ENCODE measurements at regions of chr1 and their contacts with region 1.

Region 1: DNA sequence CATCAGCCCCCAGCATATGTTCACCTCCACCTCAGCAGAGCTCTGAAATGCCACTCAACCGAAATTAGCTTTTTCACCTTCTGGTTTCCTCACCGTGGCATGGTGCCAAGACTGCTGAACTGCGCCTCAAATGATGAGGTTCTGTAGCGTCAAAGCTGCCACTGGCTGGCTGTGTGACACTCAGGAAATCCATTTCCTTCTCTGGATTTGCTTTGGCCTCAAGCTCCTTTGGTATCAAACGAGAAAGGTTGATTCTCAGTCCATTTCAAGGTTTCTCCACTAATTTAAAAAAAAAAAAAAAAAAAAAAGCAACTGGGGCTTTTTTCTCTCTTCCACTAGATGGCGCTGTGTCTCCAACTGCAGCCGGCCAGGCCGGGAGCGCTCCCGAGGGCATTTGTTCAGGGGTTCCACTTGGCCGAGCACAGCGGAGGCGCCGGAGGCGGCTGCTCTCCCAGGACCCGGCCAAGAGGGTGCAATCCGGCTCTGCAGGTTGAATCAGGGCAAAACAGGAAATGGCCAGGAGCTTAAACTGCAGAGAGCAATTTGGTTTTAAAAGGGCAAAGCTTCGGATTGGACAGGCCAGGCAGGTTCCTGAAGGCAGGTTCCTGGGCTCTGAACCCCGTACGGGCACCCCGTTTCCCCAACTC is 26.5 kb upstream of the PLA2G2C start:
- DNase-seq: peak; percentile 44 to 83 (median 53)
- ATAC-seq: peak in 3 of 4 donors; percentile 66 to 83 (median 68)
- H3K4me3 ChIP-seq: no peak overlapping the region
- H3K27ac ChIP-seq: no peak overlapping the region
- H3K4me1 ChIP-seq: peaks cover 0 to 12% (median 6%) of the 10 kb centered on the region in 12 donors
- H3K27me3 ChIP-seq: peaks cover 0 to 23% (median 15%) of the 10 kb centered on the region in 9 donors
- CTCF ChIP-seq: peak; percentile 72 to 86 (median 78)
- POLR2A ChIP-seq: no peak

Region 2: DNA sequence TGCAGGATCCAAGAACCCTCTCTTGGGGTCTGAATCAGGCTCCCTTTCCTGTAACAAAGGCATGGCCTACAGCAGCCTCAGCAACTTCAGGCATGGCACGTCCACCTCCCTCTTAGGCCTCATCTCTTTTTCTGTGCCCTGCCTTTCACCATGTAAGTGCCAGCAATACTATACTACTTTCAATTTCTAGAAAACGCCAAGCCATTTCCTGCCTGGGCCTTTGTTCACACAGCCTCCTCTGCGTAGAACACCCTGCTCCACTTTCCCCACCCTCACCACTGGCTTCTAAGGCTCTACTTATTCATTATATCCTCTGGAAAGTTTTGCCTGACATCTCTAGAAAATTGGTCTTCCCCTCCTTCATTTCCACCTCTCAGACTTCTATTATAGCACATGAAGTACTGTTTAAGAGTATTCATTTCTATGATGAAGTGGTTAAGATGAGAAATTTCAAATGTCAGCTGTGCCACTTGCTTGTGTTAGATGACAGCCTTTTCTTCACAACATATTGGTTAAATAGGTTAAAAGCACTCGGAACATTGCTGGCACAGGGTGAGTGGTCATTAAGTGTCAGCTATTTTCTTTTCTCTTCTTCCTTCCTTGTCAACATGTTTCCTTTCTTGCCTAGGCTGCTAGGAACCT is 36.3 kb after region 1 on chr1:
- intact Hi-C with region 1: no loop called
- DNase-seq: no peak
- ATAC-seq: no peak
- H3K4me3 ChIP-seq: no peak overlapping the region
- H3K27ac ChIP-seq: peak overlapping the region in 1 of 12 donors; percentile 49
- H3K4me1 ChIP-seq: no peaks in the 10 kb centered on the region
- H3K27me3 ChIP-seq: peaks cover 0 to 8% (median 0%) of the 10 kb centered on the region in 9 donors
- CTCF ChIP-seq: no peak
- POLR2A ChIP-seq: no peak

Region 3: DNA sequence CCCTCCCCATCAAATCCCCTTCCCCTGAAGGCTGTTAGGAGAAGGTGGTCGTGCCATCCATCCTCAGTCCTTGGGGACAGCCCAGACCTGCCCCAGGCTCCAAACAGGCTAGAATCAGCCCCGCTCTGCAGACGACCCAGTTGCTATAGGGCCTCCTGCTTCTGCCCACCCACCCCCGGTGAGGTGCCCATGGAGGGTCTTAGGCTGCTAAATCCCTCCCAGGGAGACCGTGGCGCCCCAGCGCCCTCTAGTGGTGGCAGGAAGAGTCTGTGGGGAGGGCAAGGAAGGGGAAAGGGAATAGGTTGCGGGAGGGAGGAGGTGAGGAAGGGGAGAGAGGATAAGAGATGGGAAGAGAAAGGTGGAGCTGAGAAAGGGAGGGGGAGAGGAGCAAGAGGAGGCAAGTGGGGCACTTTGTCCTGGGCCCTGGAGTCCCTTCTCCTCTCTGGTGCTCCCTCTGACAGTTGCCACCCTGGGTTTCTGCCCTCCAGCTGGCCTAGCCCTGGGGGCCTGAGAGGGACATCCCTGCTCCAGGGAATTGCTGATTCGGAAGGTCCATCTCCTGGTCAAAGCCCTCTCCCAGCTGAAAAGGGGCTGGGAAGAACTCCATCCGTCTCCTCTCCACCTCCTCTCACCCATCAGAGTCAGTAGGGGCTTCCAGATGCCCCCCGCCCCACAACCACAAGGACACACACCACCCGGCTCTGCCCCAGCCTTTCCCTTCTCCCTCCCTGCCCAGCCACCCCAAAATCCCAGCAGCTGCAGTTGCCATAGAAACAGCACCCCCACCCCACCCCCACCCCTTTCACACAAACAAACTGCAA is 217.8 kb after region 1 on chr1:
- intact Hi-C with region 1: loop called in 5 of 10 experiments (anchors 5 kb)
- DNase-seq: peak in 2 of 5 donors; percentile 31 to 72
- ATAC-seq: peak in 3 of 4 donors; percentile 44 to 58 (median 49)
- H3K4me3 ChIP-seq: no peak overlapping the region
- H3K27ac ChIP-seq: peak overlapping the region in 4 of 12 donors; percentile 33 to 53 (median 44)
- H3K4me1 ChIP-seq: peaks cover 0 to 3% (median 0%) of the 10 kb centered on the region in 12 donors
- H3K27me3 ChIP-seq: peaks cover 0 to 48% (median 15%) of the 10 kb centered on the region in 9 donors
- CTCF ChIP-seq: peak; percentile 38 to 64 (median 54)
- POLR2A ChIP-seq: no peak

Measured in heart left ventricle (tissue), 16 donors.